ENCODE measurements at regions of chr17 and their contacts with region 1.

Region 1: GRCh38 chr17:56244268-56244890 is 91.1 kb downstream of the ANKFN1 start:
- DNase-seq: no peak
- H3K4me3 ChIP-seq: no peak overlapping the region
- H3K27ac ChIP-seq: no peak overlapping the region
- H3K4me1 ChIP-seq: no peaks in the 10 kb centered on the region
- H3K27me3 ChIP-seq: no peaks in the 10 kb centered on the region
- CTCF ChIP-seq: peak in 2 of 3 experiments; percentile 4 to 11; a peak in 1 of 4 replicates
- EP300 ChIP-seq: no peak
- POLR2A ChIP-seq: no peak
- RAD21 ChIP-seq: peak in 1 of 2 experiments; percentile 22; a peak in 2 of 4 replicates

Region 2: GRCh38 chr17:56096026-56096810 is 148.2 kb before region 1 on chr17:
- CTCF ChIA-PET with region 1: no interaction called
- POLR2A ChIA-PET with region 1: no interaction called
- DNase-seq: no peak
- H3K4me3 ChIP-seq: no peak overlapping the region
- H3K27ac ChIP-seq: no peak overlapping the region
- H3K4me1 ChIP-seq: no peaks in the 10 kb centered on the region
- H3K27me3 ChIP-seq: no peaks in the 10 kb centered on the region
- CTCF ChIP-seq: no peak
- EP300 ChIP-seq: no peak
- POLR2A ChIP-seq: no peak
- RAD21 ChIP-seq: no peak

Region 3: GRCh38 chr17:56230660-56231059 is 13.7 kb before region 1 on chr17:
- CTCF ChIA-PET with region 1: interaction called, 10 read pairs
- POLR2A ChIA-PET with region 1: no interaction called
- DNase-seq: no peak
- H3K4me3 ChIP-seq: no peak overlapping the region
- H3K27ac ChIP-seq: no peak overlapping the region
- H3K4me1 ChIP-seq: peaks cover 0 to 5% (median 0%) of the 10 kb centered on the region in 4 experiments; a peak in 1 of 7 replicates
- H3K27me3 ChIP-seq: no peaks in the 10 kb centered on the region
- CTCF ChIP-seq: no peak
- EP300 ChIP-seq: no peak
- POLR2A ChIP-seq: no peak
- RAD21 ChIP-seq: no peak

Region 4: GRCh38 chr17:56313201-56313600 is 68.8 kb after region 1 on chr17:
- CTCF ChIA-PET with region 1: no interaction called
- POLR2A ChIA-PET with region 1: no interaction called
- DNase-seq: no peak
- H3K4me3 ChIP-seq: no peak overlapping the region
- H3K27ac ChIP-seq: no peak overlapping the region
- H3K4me1 ChIP-seq: no peaks in the 10 kb centered on the region
- H3K27me3 ChIP-seq: peaks cover 0 to 2% (median 0%) of the 10 kb centered on the region in 4 experiments; a peak in 1 of 7 replicates
- CTCF ChIP-seq: no peak
- EP300 ChIP-seq: no peak
- POLR2A ChIP-seq: no peak
- RAD21 ChIP-seq: no peak

Measured in H1 (cell line).